OCI-LY7 (cell line): ENCODE measurements at regions of chr17 and their contacts with region 1.

Region 1: GRCh38 chr17:60615840-60616239 is 15.8 kb downstream of the PPM1D start:
- DNase-seq: no peak
- H3K4me3 ChIP-seq: no peak overlapping the region
- H3K27ac ChIP-seq: no peak overlapping the region
- H3K4me1 ChIP-seq: no peaks in the 10 kb centered on the region
- CTCF ChIP-seq: no peak

Region 2: DNA sequence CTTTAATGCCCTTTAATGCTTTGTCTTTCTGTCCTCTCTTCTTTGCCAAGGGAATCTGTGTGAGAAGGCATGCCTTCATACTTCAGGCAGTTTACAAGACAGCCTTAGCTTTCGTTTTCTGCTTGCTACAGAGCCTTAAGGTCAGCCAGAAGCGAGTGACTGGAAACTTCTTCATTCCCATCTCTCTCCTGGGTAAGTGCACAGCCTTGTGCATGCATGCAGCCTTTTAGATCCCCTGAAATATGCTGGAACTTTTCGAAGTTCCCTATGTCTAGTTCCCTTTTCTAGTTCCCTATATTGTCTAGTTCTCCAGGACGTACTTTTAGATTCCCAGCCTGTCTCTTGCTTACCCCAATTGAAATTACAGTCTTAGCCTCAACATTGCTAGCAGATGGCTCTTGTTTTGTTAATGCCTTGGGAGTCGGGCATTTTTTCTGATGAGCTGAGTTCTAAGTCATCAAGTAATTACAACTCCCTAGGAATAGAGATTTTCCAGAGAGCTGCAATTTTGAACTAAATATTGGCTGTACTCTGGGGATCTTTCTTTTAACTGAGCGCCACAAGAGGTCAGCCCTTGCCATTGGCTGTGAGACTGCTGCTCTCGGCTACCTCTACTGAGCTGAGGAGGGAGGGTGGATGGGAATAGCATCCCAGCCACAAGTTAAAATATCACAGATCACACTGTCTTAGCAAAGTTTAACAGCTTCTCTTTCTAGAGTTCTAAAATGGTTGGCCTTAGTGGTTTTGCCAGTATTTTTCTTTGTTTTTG is 38.5 kb before region 1 on chr17:
- CTCF ChIA-PET with region 1: no interaction called
- POLR2A ChIA-PET with region 1: no interaction called
- intact Hi-C with region 1: no loop called
- DNase-seq: no peak
- H3K4me3 ChIP-seq: no peak overlapping the region
- H3K27ac ChIP-seq: no peak overlapping the region
- H3K4me1 ChIP-seq: no peaks in the 10 kb centered on the region
- CTCF ChIP-seq: peak; percentile 28; the same call in 1 of the 2 replicates

Region 3: GRCh38 chr17:60652454-60653247 is 36.8 kb after region 1 on chr17:
- CTCF ChIA-PET with region 1: no interaction called
- POLR2A ChIA-PET with region 1: no interaction called
- intact Hi-C with region 1: loop called (anchors 1 kb)
- DNase-seq: peak; percentile 47
- H3K4me3 ChIP-seq: no peak overlapping the region
- H3K27ac ChIP-seq: peak overlapping the region; percentile 1
- H3K4me1 ChIP-seq: peaks cover 19% of the 10 kb centered on the region
- CTCF ChIP-seq: no peak